Activated CD4-positive, alpha-beta T cell treated with anti-CD3 and anti-CD28 coated beads for 36 hours (primary cell): ENCODE measurements at regions of chr1 and their contacts with region 1.

Region 1: DNA sequence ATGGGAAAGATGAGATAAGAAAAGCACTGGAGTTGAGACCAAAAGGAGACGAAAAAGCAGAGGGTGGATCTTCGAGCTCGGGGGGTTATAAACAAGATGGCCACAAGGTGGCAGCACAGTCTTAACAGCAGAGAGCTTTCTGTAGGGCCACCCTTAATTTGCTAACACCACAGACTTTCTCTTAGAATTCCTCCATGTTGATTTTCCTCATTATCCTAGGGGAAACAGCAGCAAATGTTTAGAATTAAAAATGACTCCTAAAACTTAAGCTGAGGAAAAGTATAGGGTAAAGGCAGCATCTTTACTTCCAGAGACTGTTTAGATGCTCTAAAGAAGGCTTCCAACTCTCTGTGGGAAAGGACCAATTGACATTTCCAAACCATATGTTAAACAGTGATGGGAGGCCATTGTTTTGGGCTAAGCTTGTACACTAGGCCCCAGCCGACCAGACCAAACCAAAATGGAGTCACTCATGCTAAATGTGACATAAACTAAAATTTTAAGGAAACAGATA is 2.5 kb upstream of the APOBEC4 start:
- DNase-seq: peak; percentile 86
- ATAC-seq: peak; percentile 27
- H3K4me3 Mint-ChIP-seq: no peak overlapping the region
- H3K27ac Mint-ChIP-seq: no peak overlapping the region
- H3K4me1 Mint-ChIP-seq: peaks cover 35% of the 10 kb centered on the region
- H3K27me3 Mint-ChIP-seq: no peaks in the 10 kb centered on the region

Region 2: DNA sequence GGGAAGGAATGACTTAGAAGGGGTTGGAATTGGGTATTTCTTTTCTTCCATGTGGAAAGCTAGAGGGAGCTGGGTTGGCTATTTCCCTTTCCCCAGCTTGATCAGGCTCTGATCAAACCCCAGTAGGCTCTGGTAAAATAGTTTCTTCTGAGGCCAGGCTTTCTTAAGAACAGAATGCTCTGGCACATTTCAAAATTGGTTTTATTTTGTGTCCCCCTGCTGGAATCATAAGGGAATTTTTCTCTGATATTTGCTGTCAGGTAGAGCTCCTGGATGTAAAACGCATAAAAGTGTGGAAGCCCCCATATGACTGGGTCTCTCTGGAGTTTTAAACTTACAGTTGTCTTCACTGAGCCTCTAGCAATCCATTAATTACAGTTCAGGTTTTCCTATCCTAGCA is 14.6 kb after region 1 on chr1:
- CTCF ChIA-PET with region 1: interaction called, 10 read pairs
- POLR2A ChIA-PET with region 1: no interaction called
- intact Hi-C with region 1: no loop called
- DNase-seq: no peak
- ATAC-seq: no peak
- H3K4me3 Mint-ChIP-seq: no peak overlapping the region
- H3K27ac Mint-ChIP-seq: no peak overlapping the region
- H3K4me1 Mint-ChIP-seq: no peaks in the 10 kb centered on the region
- H3K27me3 Mint-ChIP-seq: no peaks in the 10 kb centered on the region

Region 3: DNA sequence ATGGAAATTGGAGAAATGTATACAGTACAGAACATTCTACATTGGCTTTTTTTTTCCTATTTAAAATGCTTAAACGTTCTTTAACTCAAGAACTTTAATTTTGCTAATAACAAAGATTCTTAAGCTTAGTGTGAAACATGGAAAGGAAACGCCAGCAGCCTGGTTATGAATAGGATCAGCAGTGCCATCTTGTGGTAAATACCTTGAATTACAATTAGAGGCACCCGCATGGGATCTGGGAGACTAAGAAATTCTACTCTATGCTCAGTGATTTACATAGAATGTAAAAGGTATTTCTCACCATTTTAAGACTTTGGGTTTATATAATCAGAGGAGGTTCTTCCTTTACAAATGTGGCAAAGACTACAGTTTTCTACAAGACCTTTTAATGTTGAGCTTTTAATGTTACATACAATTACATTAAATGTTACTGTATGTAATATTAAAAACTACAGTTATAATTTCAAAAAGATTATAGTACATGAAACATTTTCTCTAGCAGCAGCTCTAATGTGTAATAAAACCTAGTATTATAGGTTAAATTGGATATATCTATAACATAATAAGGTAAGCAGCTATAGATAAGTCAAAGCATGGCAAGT is 29.6 kb after region 1 on chr1:
- CTCF ChIA-PET with region 1: interaction called, 84 read pairs
- POLR2A ChIA-PET with region 1: no interaction called
- intact Hi-C with region 1: loop called (anchors 1 kb)
- DNase-seq: peak; percentile 30
- ATAC-seq: peak; percentile 66
- H3K4me3 Mint-ChIP-seq: no peak overlapping the region
- H3K27ac Mint-ChIP-seq: no peak overlapping the region
- H3K4me1 Mint-ChIP-seq: peaks cover 7% of the 10 kb centered on the region
- H3K27me3 Mint-ChIP-seq: peaks cover 4% of the 10 kb centered on the region

Region 4: DNA sequence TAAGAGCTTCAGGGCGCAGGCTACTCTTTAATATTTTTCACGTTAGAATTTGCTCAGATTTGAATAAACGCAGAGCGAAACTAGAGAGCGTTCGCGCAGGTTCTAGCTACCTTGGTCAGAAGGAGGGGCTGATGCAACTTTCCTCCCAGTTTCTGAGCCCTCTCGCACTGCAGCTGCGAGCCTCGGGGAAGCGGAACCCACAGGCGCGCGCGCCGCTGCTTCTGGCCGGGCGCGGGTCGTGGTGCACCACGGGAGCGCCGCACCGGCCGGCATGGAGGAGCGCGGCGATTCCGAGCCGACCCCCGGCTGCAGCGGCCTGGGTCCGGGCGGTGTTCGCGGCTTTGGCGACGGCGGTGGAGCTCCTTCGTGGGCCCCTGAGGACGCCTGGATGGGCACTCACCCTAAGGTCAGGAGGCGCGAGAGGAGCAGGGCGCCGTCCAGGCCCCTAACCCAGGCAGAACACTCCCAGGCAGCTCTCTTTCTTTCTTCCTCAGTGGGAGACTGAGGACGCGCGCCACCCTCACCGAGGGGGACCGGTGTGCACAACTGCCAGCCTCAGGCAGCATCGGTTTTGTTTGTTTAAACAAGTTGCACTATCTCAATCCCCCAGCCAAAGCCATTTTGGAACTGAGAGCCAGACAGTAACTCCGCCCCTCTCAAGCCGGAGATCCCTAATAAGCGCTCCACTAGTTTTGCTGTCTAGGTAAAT is 396.0 kb after region 1 on chr1 and contains the start of gene TSEN15:
- CTCF ChIA-PET with region 1: interaction called, 6 read pairs
- POLR2A ChIA-PET with region 1: no interaction called
- intact Hi-C with region 1: loop called (anchors 5 kb)
- DNase-seq: peak; percentile 89
- ATAC-seq: peak; percentile 97
- H3K4me3 Mint-ChIP-seq: peak within 1 kb of the TSS; percentile 93
- H3K27ac Mint-ChIP-seq: peak within 1 kb of the TSS; percentile 99
- H3K4me1 Mint-ChIP-seq: peaks cover 33% of the 10 kb centered on the region
- H3K27me3 Mint-ChIP-seq: peaks cover 9% of the 10 kb centered on the region
- total RNA-seq, gene TSEN15: 44.1 to 47.3 TPM

Region 5: GRCh38 chr1:184222652-184223052 is 567.0 kb after region 1 on chr1:
- CTCF ChIA-PET with region 1: interaction called, 4 read pairs
- POLR2A ChIA-PET with region 1: no interaction called
- intact Hi-C with region 1: loop called in 1 of 2 experiments (anchors 1 kb)
- DNase-seq: peak; percentile 62
- ATAC-seq: no peak
- H3K4me3 Mint-ChIP-seq: no peak overlapping the region
- H3K27ac Mint-ChIP-seq: no peak overlapping the region
- H3K4me1 Mint-ChIP-seq: no peaks in the 10 kb centered on the region
- H3K27me3 Mint-ChIP-seq: no peaks in the 10 kb centered on the region